Dendritic cell treated with granulocyte-macrophage colony-stimulating factor and Interleukin-4, amounts not matched to agents 40 ng/mL and 50 ng/mL, for 4 days (primary cell): ENCODE measurements at regions of chr15 and their contacts with region 1.

Region 1: DNA sequence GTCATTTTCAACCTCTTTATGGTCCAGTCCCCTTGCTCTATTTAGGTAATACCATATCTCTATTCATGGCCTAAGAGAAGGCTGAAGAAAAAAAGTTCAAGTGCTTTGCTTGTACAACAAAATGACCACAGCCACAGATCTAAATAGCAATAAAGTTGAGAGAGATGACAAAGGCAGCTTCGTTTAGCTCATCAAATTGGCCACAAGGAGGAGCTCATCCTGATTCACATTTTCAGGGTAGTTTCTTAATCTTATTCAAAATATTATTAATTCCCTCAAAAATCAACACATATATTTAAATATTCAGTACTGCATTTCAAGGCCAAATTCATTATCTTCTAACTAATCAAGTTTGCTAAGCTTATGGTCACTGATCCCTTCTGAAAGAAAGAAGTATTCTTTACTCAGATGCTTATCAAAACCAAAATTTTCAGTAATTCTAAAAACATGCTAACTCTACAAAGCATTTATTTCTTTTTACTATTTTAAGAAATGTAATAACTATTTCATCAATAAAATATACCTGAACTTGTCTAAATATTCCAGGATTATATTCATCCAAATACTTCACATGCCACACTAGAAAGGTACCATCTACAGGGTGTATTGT is 85.5 kb downstream of the DMXL2 start:
- H3K4me3 Mint-ChIP-seq: no peak overlapping the region
- H3K27ac Mint-ChIP-seq: no peak overlapping the region
- H3K4me1 Mint-ChIP-seq: no peaks in the 10 kb centered on the region
- H3K27me3 Mint-ChIP-seq: no peaks in the 10 kb centered on the region

Region 2: GRCh38 chr15:51776952-51777574 is 240.0 kb after region 1 on chr15:
- intact Hi-C with region 1: loop called (anchors 10 kb)
- H3K4me3 Mint-ChIP-seq: no peak overlapping the region
- H3K27ac Mint-ChIP-seq: no peak overlapping the region
- H3K4me1 Mint-ChIP-seq: peaks cover 15% of the 10 kb centered on the region
- H3K27me3 Mint-ChIP-seq: no peaks in the 10 kb centered on the region